GM12878 (cell line): ENCODE measurements at regions of chr14 and their contacts with region 1.

Region 1: DNA sequence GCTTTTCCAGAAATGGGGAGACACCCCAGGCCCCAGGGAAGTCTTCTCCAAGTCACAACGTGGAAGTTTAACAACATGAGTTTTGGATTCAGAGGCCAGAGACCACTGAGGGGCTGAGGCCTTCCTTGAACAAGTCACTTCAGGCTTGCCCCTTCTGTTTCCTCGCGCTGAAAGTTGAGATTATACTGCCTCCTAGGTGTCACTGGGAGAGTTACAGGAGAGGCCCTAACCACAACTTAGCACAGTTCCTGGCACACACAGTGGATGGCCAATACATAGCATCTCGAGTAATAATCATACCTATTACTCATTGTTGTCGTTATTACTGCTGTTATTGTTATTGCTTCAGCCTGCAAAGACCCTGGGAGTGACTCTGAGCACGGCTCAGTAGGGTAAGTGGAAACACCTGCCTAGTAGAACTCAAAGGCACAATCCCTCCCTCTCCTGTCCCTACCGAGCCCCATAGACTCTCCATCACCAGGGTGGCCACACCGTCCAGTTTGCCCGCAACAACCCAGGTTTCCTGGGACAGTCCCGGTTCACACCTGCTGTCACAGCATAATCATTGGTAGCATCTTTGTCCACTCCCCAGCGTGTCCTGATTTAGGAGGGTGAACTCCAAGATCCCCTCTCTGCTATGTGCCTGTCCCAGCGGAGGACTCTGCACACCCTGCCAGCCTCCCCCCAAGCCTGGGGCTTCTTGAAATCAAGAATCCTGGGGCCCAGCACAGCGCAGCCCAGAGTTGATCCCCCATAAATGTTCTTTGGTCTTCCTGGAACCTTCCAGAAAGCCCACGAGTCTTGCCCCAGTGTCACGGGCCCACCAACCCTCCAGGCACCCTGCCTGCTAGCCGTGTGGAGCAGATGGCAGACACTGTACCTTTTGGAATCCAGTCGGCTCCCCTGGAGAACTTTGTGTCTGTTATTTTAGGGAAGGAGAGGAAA is 85.0 kb downstream of the SYNE3 start:
- DNase-seq: no peak
- ATAC-seq: peak; percentile 76
- H3K4me3 ChIP-seq: no peak overlapping the region
- H3K27ac ChIP-seq: no peak overlapping the region
- H3K4me1 ChIP-seq: no peaks in the 10 kb centered on the region
- H3K27me3 ChIP-seq: no peaks in the 10 kb centered on the region
- CTCF ChIP-seq: peak; percentile 28 to 46 (median 42); a peak in 4 of 6 replicates
- EP300 ChIP-seq: no peak
- POLR2A ChIP-seq: no peak
- RAD21 ChIP-seq: peak; percentile 61

Region 2: DNA sequence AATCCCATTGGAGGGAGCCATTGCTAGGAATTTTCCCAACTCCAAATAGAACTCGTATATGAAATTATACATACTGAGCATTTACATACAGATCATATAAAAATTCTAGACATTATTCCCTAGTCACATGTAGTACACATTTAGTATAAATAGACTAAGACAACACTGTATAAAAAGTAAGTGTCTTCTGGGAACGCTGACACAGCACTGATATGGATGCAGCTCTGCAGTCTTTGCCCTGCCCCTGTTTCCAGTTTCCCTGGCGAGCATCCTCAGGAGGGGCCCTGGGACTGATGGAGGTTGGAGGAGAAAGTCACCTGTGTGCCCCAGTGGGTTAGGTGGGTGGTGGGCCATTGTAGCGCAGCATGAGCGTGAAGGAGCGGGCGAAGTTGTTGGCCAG is 14.0 kb before region 1 on chr14:
- CTCF ChIA-PET with region 1: interaction called, 11 read pairs
- POLR2A ChIA-PET with region 1: no interaction called
- RAD21 ChIA-PET with region 1: no interaction called
- SMC1A ChIA-PET with region 1: no interaction called
- in situ Hi-C with region 1: no loop called
- intact Hi-C with region 1: no loop called
- DNase-seq: no peak
- ATAC-seq: no peak
- H3K4me3 ChIP-seq: no peak overlapping the region
- H3K27ac ChIP-seq: no peak overlapping the region
- H3K4me1 ChIP-seq: no peaks in the 10 kb centered on the region
- H3K27me3 ChIP-seq: no peaks in the 10 kb centered on the region
- CTCF ChIP-seq: no peak
- EP300 ChIP-seq: no peak
- POLR2A ChIP-seq: no peak
- RAD21 ChIP-seq: no peak